ENCODE measurements at regions of chr11 and their contacts with region 1.

Region 1: GRCh38 chr11:78564490-78565467 is 9.9 kb downstream of the NARS2 start:
- DNase-seq: peak; percentile 31
- H3K4me3 Mint-ChIP-seq: no peak overlapping the region
- H3K27ac Mint-ChIP-seq: peak overlapping the region; percentile 81
- H3K4me1 Mint-ChIP-seq: peaks cover 50% of the 10 kb centered on the region
- H3K27me3 Mint-ChIP-seq: no peaks in the 10 kb centered on the region

Region 2: GRCh38 chr11:77994412-77995362 is 570.1 kb before region 1 on chr11 and contains the start of gene INTS4:
- intact Hi-C with region 1: loop called (anchors 2 kb)
- DNase-seq: peak; percentile 98
- H3K4me3 Mint-ChIP-seq: peak within 1 kb of the TSS; percentile 92
- H3K27ac Mint-ChIP-seq: peak within 1 kb of the TSS; percentile 84
- H3K4me1 Mint-ChIP-seq: peaks cover 30% of the 10 kb centered on the region
- H3K27me3 Mint-ChIP-seq: no peaks in the 10 kb centered on the region
- total RNA-seq, gene INTS4: 58.2 and 63.6 TPM in 2 replicates

Region 3: DNA sequence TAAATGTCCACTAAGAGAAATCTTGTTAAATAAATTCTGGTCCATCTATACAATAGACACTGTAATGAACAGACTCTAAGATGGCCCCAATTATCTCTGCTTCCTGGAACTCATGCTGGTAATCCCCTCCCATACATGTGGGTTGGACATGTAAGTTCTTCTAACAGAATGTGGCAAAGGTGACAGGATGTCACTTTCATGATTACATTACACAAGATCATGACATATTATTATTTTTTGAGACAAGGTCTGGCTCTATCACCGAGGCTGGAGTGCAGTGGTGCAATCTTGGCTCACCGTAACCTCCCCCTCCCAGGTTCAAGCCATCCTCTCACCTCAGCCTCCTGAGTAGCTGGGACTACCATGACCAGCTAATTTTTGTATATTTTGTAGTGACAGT is 470.5 kb before region 1 on chr11:
- intact Hi-C with region 1: loop called (anchors 1 kb)
- DNase-seq: peak; percentile 20
- H3K4me3 Mint-ChIP-seq: peak overlapping the region; percentile 11
- H3K27ac Mint-ChIP-seq: peak overlapping the region; percentile 82
- H3K4me1 Mint-ChIP-seq: peaks cover 10% of the 10 kb centered on the region
- H3K27me3 Mint-ChIP-seq: no peaks in the 10 kb centered on the region

Region 4: DNA sequence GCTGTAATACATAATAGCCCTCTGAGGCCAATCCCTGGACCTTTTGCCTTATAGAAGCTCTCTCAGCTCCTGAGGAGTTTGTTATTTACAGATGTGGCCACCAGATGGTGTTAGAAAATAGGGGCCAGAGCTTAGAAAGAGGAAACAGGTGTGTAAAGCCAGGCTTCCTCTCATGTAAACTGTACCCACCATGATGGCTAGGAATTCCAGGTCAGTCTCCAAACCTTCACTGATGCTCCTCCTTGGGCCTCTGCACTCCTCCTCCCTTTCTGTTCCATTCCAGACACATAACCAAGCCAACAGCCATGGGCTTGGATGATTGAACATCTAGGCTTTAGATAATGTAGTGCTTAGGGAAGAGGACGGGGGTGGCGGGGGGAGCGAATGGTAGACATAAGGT is 336.3 kb before region 1 on chr11:
- intact Hi-C with region 1: loop called (anchors 1 kb)
- DNase-seq: peak; percentile 21
- H3K4me3 Mint-ChIP-seq: no peak overlapping the region
- H3K27ac Mint-ChIP-seq: no peak overlapping the region
- H3K4me1 Mint-ChIP-seq: peaks cover 75% of the 10 kb centered on the region
- H3K27me3 Mint-ChIP-seq: no peaks in the 10 kb centered on the region

Region 5: GRCh38 chr11:78325274-78325781 is 239.5 kb before region 1 on chr11:
- intact Hi-C with region 1: loop called (anchors 5 kb)
- DNase-seq: peak; percentile 28
- H3K4me3 Mint-ChIP-seq: peak overlapping the region; percentile 56
- H3K27ac Mint-ChIP-seq: peak overlapping the region; percentile 86
- H3K4me1 Mint-ChIP-seq: peaks cover 78% of the 10 kb centered on the region
- H3K27me3 Mint-ChIP-seq: no peaks in the 10 kb centered on the region

Region 6: DNA sequence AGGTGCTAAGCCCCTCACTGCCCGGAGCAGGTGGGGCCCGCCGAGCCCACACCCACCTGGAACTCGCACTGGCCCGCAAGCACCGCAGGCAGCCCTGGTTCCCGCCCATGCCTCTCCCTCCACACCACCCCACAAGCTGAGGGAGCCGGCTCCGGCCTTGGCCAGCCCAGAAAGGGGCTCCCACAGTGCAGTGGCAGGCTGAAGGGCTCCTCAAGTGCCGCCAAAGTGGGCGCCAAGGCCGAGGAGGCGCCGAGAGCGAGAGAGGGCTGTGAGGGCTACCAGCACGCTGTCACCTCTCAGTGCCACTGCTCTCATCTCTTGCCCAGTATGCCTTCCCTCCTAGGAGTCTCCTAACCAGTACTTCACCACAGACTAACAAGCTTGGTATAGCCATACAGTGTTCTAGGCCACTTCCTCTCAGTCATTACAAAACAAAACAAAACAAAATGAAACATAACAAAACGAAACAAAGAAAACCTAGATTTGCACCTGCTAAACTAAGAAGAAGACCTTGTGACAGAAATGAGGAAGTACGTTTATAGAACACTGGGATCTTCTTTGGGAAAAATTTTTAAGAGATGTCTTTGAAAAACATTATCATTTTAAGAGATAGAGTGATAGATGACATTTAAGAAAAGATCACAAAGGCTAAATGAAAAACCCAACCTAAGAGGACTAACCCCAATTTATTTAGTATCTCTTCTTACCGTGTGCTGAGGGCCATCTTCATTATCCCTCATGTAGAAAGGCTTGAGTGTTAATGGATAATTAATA is 99.4 kb before region 1 on chr11:
- intact Hi-C with region 1: loop called (anchors 2 kb)
- DNase-seq: peak; percentile 59
- H3K4me3 Mint-ChIP-seq: peak overlapping the region; percentile 73
- H3K27ac Mint-ChIP-seq: peak overlapping the region; percentile 92
- H3K4me1 Mint-ChIP-seq: peaks cover 45% of the 10 kb centered on the region
- H3K27me3 Mint-ChIP-seq: no peaks in the 10 kb centered on the region

Region 7: GRCh38 chr11:78533399-78533798 is 31.4 kb before region 1 on chr11:
- intact Hi-C with region 1: no loop called
- DNase-seq: no peak
- H3K4me3 Mint-ChIP-seq: no peak overlapping the region
- H3K27ac Mint-ChIP-seq: no peak overlapping the region
- H3K4me1 Mint-ChIP-seq: peaks cover 18% of the 10 kb centered on the region
- H3K27me3 Mint-ChIP-seq: no peaks in the 10 kb centered on the region